Activated CD4-positive, alpha-beta T cell treated with anti-CD3 and anti-CD28 coated beads for 36 hours (primary cell): ENCODE measurements at regions of chr17 and their contacts with region 1.

Region 1: GRCh38 chr17:52181782-52182181 is 23.3 kb upstream of the CA10 start:
- DNase-seq: no peak
- ATAC-seq: no peak
- H3K4me3 Mint-ChIP-seq: no peak overlapping the region
- H3K27ac Mint-ChIP-seq: no peak overlapping the region
- H3K4me1 Mint-ChIP-seq: no peaks in the 10 kb centered on the region
- H3K27me3 Mint-ChIP-seq: peaks cover 2% of the 10 kb centered on the region

Region 2: GRCh38 chr17:52079496-52079895 is 102.3 kb before region 1 on chr17:
- CTCF ChIA-PET with region 1: no interaction called
- POLR2A ChIA-PET with region 1: no interaction called
- intact Hi-C with region 1: no loop called
- DNase-seq: no peak
- ATAC-seq: no peak
- H3K4me3 Mint-ChIP-seq: no peak overlapping the region
- H3K27ac Mint-ChIP-seq: no peak overlapping the region
- H3K4me1 Mint-ChIP-seq: no peaks in the 10 kb centered on the region
- H3K27me3 Mint-ChIP-seq: no peaks in the 10 kb centered on the region

Region 3: GRCh38 chr17:52344895-52345294 is 163.1 kb after region 1 on chr17:
- CTCF ChIA-PET with region 1: no interaction called
- POLR2A ChIA-PET with region 1: no interaction called
- intact Hi-C with region 1: no loop called
- DNase-seq: no peak
- ATAC-seq: no peak
- H3K4me3 Mint-ChIP-seq: no peak overlapping the region
- H3K27ac Mint-ChIP-seq: no peak overlapping the region
- H3K4me1 Mint-ChIP-seq: no peaks in the 10 kb centered on the region
- H3K27me3 Mint-ChIP-seq: no peaks in the 10 kb centered on the region

Region 4: DNA sequence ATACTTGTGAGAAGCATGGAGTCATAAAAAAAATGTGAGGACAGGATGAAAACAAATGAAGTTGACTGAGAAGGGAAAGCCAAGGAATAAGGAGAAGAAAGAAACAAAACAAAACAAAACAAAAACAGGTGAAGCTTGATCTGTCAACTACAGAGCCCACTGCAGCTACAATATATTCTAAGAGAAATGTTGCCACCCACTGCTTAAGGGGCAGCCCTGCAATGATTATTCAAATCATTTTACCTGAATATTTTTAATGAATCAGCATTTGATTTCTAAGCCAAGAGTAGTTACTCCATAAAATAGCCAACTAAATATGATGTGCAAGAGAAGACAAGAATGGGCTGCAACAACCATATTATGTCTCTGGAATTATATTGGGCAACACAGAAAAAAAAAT is 1388.9 kb after region 1 on chr17:
- CTCF ChIA-PET with region 1: no interaction called
- POLR2A ChIA-PET with region 1: no interaction called
- intact Hi-C with region 1: loop called in 1 of 2 experiments (anchors 10 kb)
- DNase-seq: no peak
- ATAC-seq: no peak
- H3K4me3 Mint-ChIP-seq: no peak overlapping the region
- H3K27ac Mint-ChIP-seq: no peak overlapping the region
- H3K4me1 Mint-ChIP-seq: no peaks in the 10 kb centered on the region
- H3K27me3 Mint-ChIP-seq: no peaks in the 10 kb centered on the region